Left cardiac atrium (tissue), 4 donors: ENCODE measurements at regions of chr14 and their contacts with region 1.

Region 1: GRCh38 chr14:32252030-32252670 is 49.1 kb upstream of the RNU6-8 start:
- DNase-seq: peak; percentile 34
- ATAC-seq: peak; percentile 82 to 86

Region 2: GRCh38 chr14:31449971-31450610 is 802.1 kb before region 1 on chr14:
- intact Hi-C with region 1: loop called in 1 of 2 experiments (anchors 5 kb)
- DNase-seq: no peak
- ATAC-seq: peak in 1 of 2 donors; percentile 57

Region 3: DNA sequence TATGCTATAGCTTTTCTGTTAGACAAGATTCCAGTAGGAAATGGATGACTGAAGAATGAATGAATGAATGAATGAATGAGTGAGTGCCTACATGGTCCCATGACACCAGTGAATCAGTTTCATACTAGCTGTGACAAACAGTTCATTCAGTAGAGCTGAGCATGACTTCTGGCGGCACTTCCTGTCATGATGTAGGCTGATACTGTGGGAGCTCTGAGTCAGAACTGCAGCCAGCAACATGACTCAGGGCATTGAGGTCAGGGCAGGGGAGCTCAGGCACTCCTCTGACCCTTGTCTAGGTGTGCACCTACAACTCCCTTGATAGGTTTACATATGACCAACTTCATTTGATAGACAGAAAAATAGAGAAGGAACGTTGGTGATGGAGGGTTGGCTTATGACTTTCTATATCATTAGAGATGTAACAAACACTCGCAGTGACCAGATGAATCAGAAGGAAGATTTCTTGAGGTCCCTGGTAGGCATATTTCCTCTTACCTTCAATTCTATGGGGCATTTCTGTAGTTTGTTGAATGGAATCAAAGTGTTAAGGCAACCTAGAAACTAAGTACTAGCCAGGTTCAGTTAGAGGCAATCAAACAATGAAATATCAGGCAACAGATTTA is 314.3 kb before region 1 on chr14:
- intact Hi-C with region 1: loop called (anchors 2 to 10 kb)
- DNase-seq: peak; percentile 69
- ATAC-seq: peak in 1 of 2 donors; percentile 94

Region 4: DNA sequence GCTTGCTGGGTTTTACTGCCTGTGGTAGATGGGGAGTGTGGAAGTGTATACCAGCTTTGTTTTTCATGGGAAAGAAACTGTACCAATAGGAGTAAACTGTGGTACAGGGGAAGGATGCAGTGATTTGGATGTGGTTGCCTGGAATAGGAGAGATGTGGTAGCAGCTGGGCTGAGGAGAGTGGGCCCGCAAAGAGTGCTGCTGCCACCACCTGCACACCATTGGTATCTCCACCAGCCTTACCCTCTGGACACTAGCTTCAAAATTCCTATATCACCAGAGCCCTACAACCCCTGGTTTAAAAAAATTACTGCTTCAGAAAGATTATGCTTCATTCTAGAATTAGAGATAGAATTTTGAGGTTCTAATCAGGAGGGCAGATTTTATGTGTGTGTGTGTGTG is 130.6 kb after region 1 on chr14:
- intact Hi-C with region 1: loop called in 1 of 2 experiments (anchors 5 kb)
- DNase-seq: no peak
- ATAC-seq: peak; percentile 67 to 88

Region 5: DNA sequence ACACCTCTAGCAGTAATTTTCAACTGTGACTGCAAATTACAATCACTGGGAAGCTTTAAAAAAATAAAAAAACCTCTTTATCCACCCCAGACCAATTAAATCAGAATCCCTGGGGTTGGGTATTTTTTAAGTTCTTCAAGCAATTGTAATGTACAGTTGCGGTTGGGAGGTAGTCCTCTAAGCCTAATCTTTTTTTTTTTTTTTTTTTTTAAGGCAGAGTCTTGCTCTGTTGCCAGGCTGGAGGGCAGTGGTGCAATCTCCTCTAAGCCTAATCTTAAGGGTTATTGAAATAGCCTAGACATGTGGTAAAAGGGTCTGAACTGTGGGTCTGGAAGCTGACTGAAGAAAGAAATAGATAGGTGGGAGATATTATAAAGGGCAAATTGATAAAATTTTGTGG is 307.4 kb after region 1 on chr14:
- intact Hi-C with region 1: loop called in 1 of 2 experiments (anchors 10 kb)
- DNase-seq: no peak
- ATAC-seq: peak; percentile 47 to 72

Region 6: DNA sequence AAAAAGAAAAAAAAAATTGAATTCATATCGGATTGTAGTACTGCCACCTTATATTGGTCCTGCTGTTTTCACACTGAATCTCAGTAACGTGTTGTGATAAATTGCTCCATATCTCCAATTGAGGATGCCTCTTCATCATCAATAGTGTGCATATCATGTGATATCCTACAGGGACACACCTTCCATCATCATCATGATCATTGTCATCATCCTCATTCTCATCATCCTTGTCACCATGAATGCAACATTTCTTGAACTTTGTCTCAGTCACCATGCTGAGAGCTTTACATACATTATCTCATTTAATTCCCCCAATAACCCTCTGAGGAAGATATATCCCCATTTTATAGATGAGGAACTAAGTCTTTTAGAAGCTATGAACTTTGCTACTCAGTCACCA is 709.3 kb after region 1 on chr14:
- intact Hi-C with region 1: no loop called
- DNase-seq: no peak
- ATAC-seq: no peak